ENCODE measurements at regions of chr22 and their contacts with region 1.

Region 1: GRCh38 chr22:22748297-22748743 is 103.9 kb downstream of the GGTLC2 start:
- DNase-seq: peak in 1 of 2 experiments; percentile 51
- ATAC-seq: peak; percentile 83 to 93
- H3K4me3 ChIP-seq: no peak overlapping the region
- H3K27ac ChIP-seq: no peak overlapping the region
- H3K4me1 ChIP-seq: no peaks in the 10 kb centered on the region
- CTCF ChIP-seq: peak; percentile 63
- EP300 ChIP-seq: no peak
- POLR2A ChIP-seq: no peak
- RAD21 ChIP-seq: peak; percentile 52 to 61

Region 2: DNA sequence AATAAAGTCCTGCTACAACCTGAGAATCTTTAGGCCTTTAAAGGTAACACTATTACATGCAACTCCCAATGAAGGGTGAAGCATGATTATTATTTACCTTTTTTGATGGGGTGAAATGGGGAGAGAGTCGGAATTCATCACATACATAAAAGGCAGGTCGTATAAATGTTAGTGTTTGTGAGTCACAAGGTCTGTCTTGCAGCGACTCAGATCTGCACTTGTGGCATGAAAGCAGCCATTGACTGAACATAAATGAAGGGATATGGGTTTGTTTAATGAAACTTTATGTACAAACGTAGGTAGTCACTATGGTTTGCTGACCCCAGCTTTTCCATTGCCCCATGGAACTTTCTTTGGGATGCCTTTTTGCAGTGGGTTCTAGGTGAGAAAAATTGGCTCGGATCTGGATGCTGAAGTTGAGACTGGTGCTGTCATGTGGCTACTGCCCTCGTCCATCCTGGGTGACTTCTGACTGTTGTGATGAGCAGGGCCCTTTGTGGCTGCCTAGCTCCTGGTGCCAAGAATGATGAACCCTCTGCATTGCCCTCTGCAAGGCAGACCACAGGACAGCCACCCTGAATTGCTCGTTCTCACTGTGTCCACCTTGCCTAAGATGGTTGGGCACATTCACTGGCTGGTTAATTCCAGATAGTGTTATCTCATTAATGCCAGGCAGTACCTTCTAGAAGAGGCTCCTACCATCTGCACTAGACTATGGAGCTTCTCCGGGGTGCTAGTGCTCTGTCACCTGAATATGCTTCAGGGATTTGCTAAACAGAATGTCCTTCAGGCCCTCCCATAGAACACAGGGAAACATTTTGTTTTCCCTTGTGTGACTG is 92.6 kb before region 1 on chr22:
- CTCF ChIA-PET with region 1: no interaction called
- POLR2A ChIA-PET with region 1: no interaction called
- DNase-seq: no peak
- ATAC-seq: no peak
- H3K4me3 ChIP-seq: no peak overlapping the region
- H3K27ac ChIP-seq: no peak overlapping the region
- H3K4me1 ChIP-seq: no peaks in the 10 kb centered on the region
- CTCF ChIP-seq: no peak
- EP300 ChIP-seq: no peak
- POLR2A ChIP-seq: no peak
- RAD21 ChIP-seq: no peak

Region 3: GRCh38 chr22:22666307-22667091 is 81.8 kb before region 1 on chr22:
- CTCF ChIA-PET with region 1: interaction called, 34 read pairs
- POLR2A ChIA-PET with region 1: no interaction called
- DNase-seq: peak; percentile 8 to 33
- ATAC-seq: peak; percentile 90 to 95
- H3K4me3 ChIP-seq: no peak overlapping the region
- H3K27ac ChIP-seq: no peak overlapping the region
- H3K4me1 ChIP-seq: no peaks in the 10 kb centered on the region
- CTCF ChIP-seq: peak; percentile 59
- EP300 ChIP-seq: no peak
- POLR2A ChIP-seq: no peak
- RAD21 ChIP-seq: peak; percentile 75

Region 4: GRCh38 chr22:22687638-22688500 is 60.5 kb before region 1 on chr22:
- CTCF ChIA-PET with region 1: interaction called, 16 read pairs
- POLR2A ChIA-PET with region 1: no interaction called
- DNase-seq: peak in 1 of 2 experiments; percentile 52
- ATAC-seq: peak; percentile 64 to 85; a peak in 3 of 6 replicates
- H3K4me3 ChIP-seq: no peak overlapping the region
- H3K27ac ChIP-seq: peak overlapping the region in 1 of 2 experiments; percentile 29; a peak in 1 of 6 replicates
- H3K4me1 ChIP-seq: peaks cover 42% of the 10 kb centered on the region
- CTCF ChIP-seq: peak; percentile 55
- EP300 ChIP-seq: no peak
- POLR2A ChIP-seq: no peak
- RAD21 ChIP-seq: peak; percentile 52 to 66; a peak in 4 of 5 replicates

Region 5: DNA sequence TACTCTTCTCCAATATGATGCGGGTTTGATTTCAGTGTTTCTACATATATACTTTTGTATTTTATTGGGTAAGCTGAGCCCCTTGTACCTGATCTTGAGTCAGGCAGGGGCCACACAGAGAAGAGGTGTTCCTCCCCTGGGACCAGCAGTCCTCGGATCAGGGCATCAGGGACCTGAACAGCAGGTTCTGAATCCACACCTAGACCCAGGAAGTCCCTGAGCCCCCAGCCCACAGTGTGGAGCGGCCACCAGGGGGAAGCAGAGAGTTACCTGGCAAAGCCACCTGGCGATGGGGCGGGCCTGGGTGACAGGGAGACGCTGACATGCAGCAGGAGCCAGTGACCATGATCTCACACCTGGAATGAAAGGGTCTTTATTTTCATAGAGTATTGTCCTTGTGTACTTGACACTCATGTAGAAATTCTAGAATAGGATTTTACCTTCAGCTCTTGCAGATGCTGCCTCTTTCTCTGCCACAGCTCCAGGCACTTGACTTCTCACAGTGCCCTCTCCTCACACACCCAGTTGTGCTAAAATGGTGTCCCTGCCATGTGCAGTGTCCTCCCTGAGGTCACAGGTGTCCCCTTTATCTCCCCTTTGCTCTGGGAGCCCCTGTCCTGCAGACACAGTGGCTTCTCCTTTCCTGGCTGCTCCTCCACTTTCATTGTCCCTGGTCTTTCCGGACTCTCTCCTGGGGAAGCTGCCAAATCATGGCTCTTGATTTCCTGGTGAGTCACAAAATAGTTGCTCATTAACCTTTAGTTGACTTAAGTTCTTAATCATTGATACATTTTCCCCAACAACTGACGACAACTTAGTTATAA is 55.4 kb before region 1 on chr22:
- CTCF ChIA-PET with region 1: interaction called, 16 read pairs
- POLR2A ChIA-PET with region 1: no interaction called
- DNase-seq: peak; percentile 56 to 69
- ATAC-seq: peak; percentile 87 to 89
- H3K4me3 ChIP-seq: 0 out of 3 replicates have a peak overlapping the region, but pooled peaks have one; percentile 16
- H3K27ac ChIP-seq: peak overlapping the region; percentile 89 to 90
- H3K4me1 ChIP-seq: peaks cover 42% of the 10 kb centered on the region
- CTCF ChIP-seq: peak; percentile 67
- EP300 ChIP-seq: no peak
- POLR2A ChIP-seq: no peak
- RAD21 ChIP-seq: peak; percentile 53 to 60; a peak in 4 of 5 replicates

Region 6: GRCh38 chr22:22702237-22703202 is 45.8 kb before region 1 on chr22:
- CTCF ChIA-PET with region 1: interaction called, 10 read pairs
- POLR2A ChIA-PET with region 1: no interaction called
- DNase-seq: no peak
- ATAC-seq: peak; percentile 26 to 77; a peak in 3 of 6 replicates
- H3K4me3 ChIP-seq: no peak overlapping the region
- H3K27ac ChIP-seq: peak overlapping the region; percentile 83 to 86
- H3K4me1 ChIP-seq: peaks cover 34% of the 10 kb centered on the region
- CTCF ChIP-seq: 0 out of 3 replicates have a peak, but pooled peaks have one; percentile 20
- EP300 ChIP-seq: no peak
- POLR2A ChIP-seq: no peak
- RAD21 ChIP-seq: peak in 1 of 2 experiments; percentile 23; a peak in 1 of 5 replicates

Region 7: DNA sequence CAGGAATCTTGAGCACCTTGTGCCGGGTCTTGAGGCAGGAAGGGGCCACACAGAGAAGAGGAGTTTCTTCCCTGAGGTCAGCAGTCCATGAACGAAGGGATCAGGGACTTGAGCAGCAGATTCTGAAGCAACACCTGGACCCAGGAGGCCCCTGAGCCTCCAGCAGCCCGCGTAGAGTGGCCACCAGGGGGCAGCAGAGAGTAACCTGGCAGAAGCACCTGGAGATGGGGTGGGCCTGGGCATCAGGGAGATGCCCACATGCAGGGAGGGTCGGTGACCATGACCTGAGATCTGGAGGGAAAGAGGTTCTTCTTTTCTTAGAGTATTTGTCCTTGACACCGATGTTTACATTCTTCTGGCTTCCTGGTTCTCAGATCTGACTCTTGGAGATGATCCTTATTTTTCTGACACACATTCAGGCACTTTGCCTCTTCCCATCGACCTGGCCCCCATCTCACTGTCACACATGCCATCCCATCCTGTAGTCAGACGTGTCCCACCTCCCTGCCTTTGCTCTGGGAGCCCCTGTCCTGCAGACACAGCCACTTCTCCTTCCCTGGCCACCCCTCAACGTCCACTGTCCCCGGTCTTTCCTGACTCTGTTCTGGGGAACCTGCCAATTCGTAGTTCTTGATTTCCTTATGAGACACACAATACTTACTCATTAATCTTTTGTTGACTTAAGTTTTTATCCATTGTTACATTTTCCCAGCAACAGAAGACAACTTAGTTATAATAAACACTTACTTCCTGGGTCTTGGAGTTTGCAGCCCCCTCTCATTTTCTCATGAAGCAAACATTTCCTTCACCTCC is 37.4 kb before region 1 on chr22:
- CTCF ChIA-PET with region 1: interaction called, 14 read pairs
- POLR2A ChIA-PET with region 1: no interaction called
- DNase-seq: peak; percentile 37 to 46
- ATAC-seq: peak; percentile 79 to 94
- H3K4me3 ChIP-seq: no peak overlapping the region
- H3K27ac ChIP-seq: peak overlapping the region; percentile 58 to 67; a peak in 5 of 6 replicates
- H3K4me1 ChIP-seq: peaks cover 18% of the 10 kb centered on the region
- CTCF ChIP-seq: peak; percentile 74
- EP300 ChIP-seq: no peak
- POLR2A ChIP-seq: no peak
- RAD21 ChIP-seq: peak; percentile 31 to 37; a peak in 3 of 5 replicates

Measured in A549 (cell line).